ENCODE measurements at regions of chr5 and their contacts with region 1.

Region 1: GRCh38 chr5:31809050-31809870 is 170.3 kb downstream of the PDZD2 start:
- DNase-seq: peak; percentile 67 to 80
- H3K4me3 ChIP-seq: no peak overlapping the region
- H3K27ac ChIP-seq: no peak overlapping the region
- H3K4me1 ChIP-seq: peaks cover 0 to 4% (median 0%) of the 10 kb centered on the region in 4 donors
- H3K27me3 ChIP-seq: no peaks in the 10 kb centered on the region
- CTCF ChIP-seq: peak; percentile 80 to 81

Region 2: DNA sequence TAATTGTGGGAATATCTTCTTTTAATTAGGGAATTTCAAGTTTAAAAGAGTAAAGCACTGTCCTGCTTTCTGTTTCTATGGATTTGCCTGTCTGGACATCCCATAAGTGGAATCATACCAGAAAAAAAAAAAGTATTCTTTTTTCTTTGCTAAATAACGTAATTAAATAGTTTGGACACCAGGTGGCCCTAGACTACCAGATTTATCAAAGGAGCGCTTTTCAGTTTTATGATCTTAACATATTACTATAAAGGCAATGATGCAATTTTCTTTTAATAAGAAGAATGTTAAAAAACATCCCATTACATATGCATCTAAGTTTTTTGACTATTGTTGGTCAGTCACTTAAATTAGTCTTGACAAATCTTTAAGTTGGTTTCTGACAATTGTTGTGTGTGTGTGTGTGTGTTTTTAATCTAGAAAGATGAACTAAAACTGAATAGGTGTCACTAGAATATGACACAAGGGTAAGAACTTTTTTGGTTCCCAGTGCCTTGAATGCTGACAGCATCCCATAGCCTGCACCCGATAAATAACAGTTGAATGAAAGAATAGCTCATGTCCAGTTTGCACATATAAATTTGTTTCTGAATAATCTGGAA is 227.7 kb before region 1 on chr5:
- intact Hi-C with region 1: loop called (anchors 5 kb)
- DNase-seq: no peak
- H3K4me3 ChIP-seq: no peak overlapping the region
- H3K27ac ChIP-seq: no peak overlapping the region
- H3K4me1 ChIP-seq: no peaks in the 10 kb centered on the region
- H3K27me3 ChIP-seq: no peaks in the 10 kb centered on the region
- CTCF ChIP-seq: peak; percentile 54 to 72

Region 3: DNA sequence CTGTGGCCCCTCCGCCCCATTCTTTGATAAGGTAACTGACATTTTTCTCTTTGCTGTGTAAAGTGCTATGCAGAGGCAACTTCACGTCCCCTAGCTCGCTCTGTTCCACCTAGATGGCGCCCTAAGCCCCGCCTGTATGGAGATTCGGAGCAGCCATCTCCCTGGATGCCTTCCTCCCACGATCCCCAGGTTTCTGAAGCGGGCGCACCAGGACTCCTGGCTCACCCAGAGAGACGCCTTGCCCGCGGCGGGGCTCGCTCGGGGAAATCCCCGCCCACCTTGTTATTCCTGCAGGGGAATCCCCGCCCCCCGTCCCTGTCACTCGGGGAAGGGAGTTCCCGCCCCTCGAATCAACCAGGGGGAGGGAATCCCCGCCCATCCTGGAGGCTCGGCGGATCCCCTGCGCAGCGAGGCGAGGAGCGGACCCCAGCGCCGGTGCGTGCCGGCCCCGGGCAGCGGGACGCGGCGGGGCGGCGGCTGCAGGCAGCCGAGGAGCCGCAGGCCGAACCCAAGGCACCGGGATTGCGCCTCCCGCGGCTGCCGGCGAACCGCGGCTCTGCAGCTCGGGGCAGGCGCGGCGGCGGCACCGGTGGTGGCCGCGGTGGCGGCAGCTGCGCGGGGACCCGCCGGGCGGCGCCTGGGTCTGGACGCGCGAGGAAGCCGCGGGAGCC is 170.4 kb before region 1 on chr5 and contains the start of gene PDZD2:
- intact Hi-C with region 1: loop called (anchors 2 kb)
- DNase-seq: peak; percentile 72 to 85
- H3K4me3 ChIP-seq: peak within 1 kb of the TSS; percentile 63 to 78
- H3K27ac ChIP-seq: peak within 1 kb of the TSS; percentile 73 to 77
- H3K4me1 ChIP-seq: peaks cover 0 to 24% (median 11%) of the 10 kb centered on the region in 4 donors
- H3K27me3 ChIP-seq: no peaks in the 10 kb centered on the region
- CTCF ChIP-seq: peak; percentile 28 to 75

Region 4: GRCh38 chr5:31733371-31733770 is 75.9 kb before region 1 on chr5:
- intact Hi-C with region 1: no loop called
- DNase-seq: no peak
- H3K4me3 ChIP-seq: no peak overlapping the region
- H3K27ac ChIP-seq: no peak overlapping the region
- H3K4me1 ChIP-seq: peaks cover 0 to 17% (median 0%) of the 10 kb centered on the region in 4 donors
- H3K27me3 ChIP-seq: no peaks in the 10 kb centered on the region
- CTCF ChIP-seq: no peak

Region 5: GRCh38 chr5:32223946-32224608 is 414.8 kb after region 1 on chr5:
- intact Hi-C with region 1: no loop called
- DNase-seq: no peak
- H3K4me3 ChIP-seq: no peak overlapping the region
- H3K27ac ChIP-seq: peak overlapping the region in 1 of 2 donors; percentile 8
- H3K4me1 ChIP-seq: peaks cover 0 to 14% (median 6%) of the 10 kb centered on the region in 4 donors
- H3K27me3 ChIP-seq: no peaks in the 10 kb centered on the region
- CTCF ChIP-seq: no peak

Region 6: GRCh38 chr5:32664523-32664922 is 855.3 kb after region 1 on chr5:
- intact Hi-C with region 1: no loop called
- DNase-seq: no peak
- H3K4me3 ChIP-seq: no peak overlapping the region
- H3K27ac ChIP-seq: no peak overlapping the region
- H3K4me1 ChIP-seq: no peaks in the 10 kb centered on the region
- H3K27me3 ChIP-seq: no peaks in the 10 kb centered on the region
- CTCF ChIP-seq: no peak